Naive thymus-derived CD4-positive, alpha-beta T cell (primary cell): ENCODE measurements at regions of chr14 and their contacts with region 1.

Region 1: GRCh38 chr14:21557084-21557901 is 22.6 kb downstream of the OR10G3 start:
- DNase-seq: peak; percentile 25 to 81 (median 74)
- ATAC-seq: peak; percentile 84
- H3K4me3 ChIP-seq: peak overlapping the region; percentile 27
- H3K4me3 Mint-ChIP-seq: peak overlapping the region in 9 of 10 donors; percentile 14 to 71 (median 46)
- H3K27ac ChIP-seq: peak overlapping the region; percentile 24
- H3K27ac Mint-ChIP-seq: peak overlapping the region in 8 of 9 donors; percentile 6 to 92 (median 64)
- H3K4me1 ChIP-seq: peaks cover 0 to 4% of the 10 kb centered on the region in 2 donors
- H3K4me1 Mint-ChIP-seq: peaks cover 2 to 12% (median 7%) of the 10 kb centered on the region in 7 donors
- H3K27me3 ChIP-seq: no peaks in the 10 kb centered on the region
- H3K27me3 Mint-ChIP-seq: peaks cover 0 to 2% (median 0%) of the 10 kb centered on the region in 5 donors

Region 2: DNA sequence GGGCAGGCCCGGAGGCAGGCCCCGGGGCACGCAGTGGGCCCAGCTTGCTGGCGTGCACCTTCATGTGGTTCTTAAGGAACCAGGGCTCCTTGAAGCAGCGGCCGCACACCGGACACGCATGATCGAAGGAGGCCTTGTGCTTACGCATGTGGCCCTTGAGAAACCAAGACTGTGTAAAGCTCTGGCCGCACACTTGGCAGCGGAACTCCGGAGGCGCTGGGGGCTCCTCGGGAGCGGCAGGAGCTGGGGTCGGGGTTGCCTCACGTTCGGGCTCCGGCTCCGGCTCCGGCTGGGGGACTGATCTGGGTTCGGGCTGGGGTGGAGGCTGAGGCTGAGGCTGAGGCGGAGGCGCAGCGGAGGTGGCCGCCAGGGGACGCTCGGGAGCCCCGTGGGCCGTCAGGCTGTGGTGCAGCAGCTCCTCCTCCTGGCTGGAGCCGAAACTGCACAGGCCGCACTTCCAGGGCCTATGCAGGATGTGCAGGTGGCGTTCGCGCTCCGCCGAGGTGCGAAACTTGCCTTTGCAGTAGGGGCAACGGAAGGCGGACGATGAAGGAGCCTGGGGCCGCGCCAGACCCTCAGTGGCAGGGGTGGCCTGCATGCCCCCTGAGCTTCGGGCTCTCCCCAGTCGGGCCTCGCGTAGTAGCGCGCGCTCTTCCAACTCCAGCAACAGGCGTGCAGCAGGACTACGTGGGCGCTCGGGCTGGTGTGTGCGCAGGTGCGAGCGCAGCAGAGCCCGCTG is 464.9 kb before region 1 on chr14:
- CTCF ChIA-PET with region 1: no interaction called
- POLR2A ChIA-PET with region 1: no interaction called
- intact Hi-C with region 1: loop called in 1 of 2 experiments (anchors 1 kb)
- DNase-seq: peak; percentile 82 to 98 (median 93)
- ATAC-seq: peak; percentile 90
- H3K4me3 ChIP-seq: no peak overlapping the region
- H3K4me3 Mint-ChIP-seq: peak overlapping the region in 1 of 10 donors; percentile 6
- H3K27ac ChIP-seq: no peak overlapping the region
- H3K27ac Mint-ChIP-seq: peak overlapping the region in 8 of 9 donors; percentile 17 to 88 (median 78)
- H3K4me1 ChIP-seq: peaks cover 6 to 14% of the 10 kb centered on the region in 2 donors
- H3K4me1 Mint-ChIP-seq: peaks cover 15 to 37% (median 27%) of the 10 kb centered on the region in 7 donors
- H3K27me3 ChIP-seq: no peaks in the 10 kb centered on the region
- H3K27me3 Mint-ChIP-seq: peaks cover 0 to 17% (median 0%) of the 10 kb centered on the region in 5 donors

Region 3: GRCh38 chr14:21241218-21241819 is 316.0 kb before region 1 on chr14:
- CTCF ChIA-PET with region 1: interaction called, 5 read pairs
- POLR2A ChIA-PET with region 1: no interaction called
- intact Hi-C with region 1: loop called (anchors 1 kb)
- DNase-seq: peak in 2 of 9 donors; percentile 38 to 49
- ATAC-seq: no peak
- H3K4me3 ChIP-seq: no peak overlapping the region
- H3K4me3 Mint-ChIP-seq: no peak overlapping the region
- H3K27ac ChIP-seq: no peak overlapping the region
- H3K27ac Mint-ChIP-seq: peak overlapping the region in 8 of 9 donors; percentile 3 to 88 (median 70)
- H3K4me1 ChIP-seq: peaks cover 44% of the 10 kb centered on the region in 2 donors
- H3K4me1 Mint-ChIP-seq: peaks cover 36 to 85% (median 60%) of the 10 kb centered on the region in 7 donors
- H3K27me3 ChIP-seq: no peaks in the 10 kb centered on the region
- H3K27me3 Mint-ChIP-seq: no peaks in the 10 kb centered on the region

Region 4: GRCh38 chr14:21437063-21437901 is 120.0 kb before region 1 on chr14:
- CTCF ChIA-PET with region 1: no interaction called
- POLR2A ChIA-PET with region 1: interaction called, 3 read pairs
- intact Hi-C with region 1: loop called (anchors 1 to 5 kb)
- DNase-seq: peak; percentile 93 to 100 (median 99)
- ATAC-seq: peak; percentile 100
- H3K4me3 ChIP-seq: peak overlapping the region; percentile 87
- H3K4me3 Mint-ChIP-seq: peak overlapping the region; percentile 86 to 97 (median 92)
- H3K27ac ChIP-seq: peak overlapping the region; percentile 94
- H3K27ac Mint-ChIP-seq: peak overlapping the region; percentile 90 to 98 (median 94)
- H3K4me1 ChIP-seq: peaks cover 13 to 22% of the 10 kb centered on the region in 2 donors
- H3K4me1 Mint-ChIP-seq: peaks cover 43 to 86% (median 68%) of the 10 kb centered on the region in 7 donors
- H3K27me3 ChIP-seq: no peaks in the 10 kb centered on the region
- H3K27me3 Mint-ChIP-seq: no peaks in the 10 kb centered on the region

Region 5: GRCh38 chr14:21498553-21499526 is 58.5 kb before region 1 on chr14:
- CTCF ChIA-PET with region 1: interaction called, 96 read pairs
- POLR2A ChIA-PET with region 1: interaction called, 4 read pairs
- intact Hi-C with region 1: loop called (anchors 1 kb)
- DNase-seq: peak in 7 of 9 donors; percentile 35 to 68 (median 61)
- ATAC-seq: peak; percentile 87
- H3K4me3 ChIP-seq: no peak overlapping the region
- H3K4me3 Mint-ChIP-seq: peak overlapping the region in 8 of 10 donors; percentile 2 to 39 (median 24)
- H3K27ac ChIP-seq: peak overlapping the region; percentile 52
- H3K27ac Mint-ChIP-seq: peak overlapping the region; percentile 56 to 90 (median 79)
- H3K4me1 ChIP-seq: peaks cover 4 to 8% of the 10 kb centered on the region in 2 donors
- H3K4me1 Mint-ChIP-seq: peaks cover 14 to 39% (median 28%) of the 10 kb centered on the region in 7 donors
- H3K27me3 ChIP-seq: no peaks in the 10 kb centered on the region
- H3K27me3 Mint-ChIP-seq: no peaks in the 10 kb centered on the region

Region 6: GRCh38 chr14:21525962-21526671 is 31.2 kb before region 1 on chr14 and contains the start of gene SALL2:
- CTCF ChIA-PET with region 1: interaction called, 9 read pairs
- POLR2A ChIA-PET with region 1: interaction called, 3 read pairs
- intact Hi-C with region 1: loop called in 1 of 2 experiments (anchors 1 kb)
- DNase-seq: peak in 8 of 9 donors; percentile 44 to 80 (median 60)
- ATAC-seq: peak; percentile 82
- H3K4me3 ChIP-seq: peak within 1 kb of the TSS; percentile 67
- H3K4me3 Mint-ChIP-seq: peak within 1 kb of the TSS; percentile 65 to 91 (median 88)
- H3K27ac ChIP-seq: peak within 1 kb of the TSS; percentile 75
- H3K27ac Mint-ChIP-seq: peak within 1 kb of the TSS; percentile 43 to 90 (median 81)
- H3K4me1 ChIP-seq: peaks cover 5 to 9% of the 10 kb centered on the region in 2 donors
- H3K4me1 Mint-ChIP-seq: peaks cover 10 to 27% (median 21%) of the 10 kb centered on the region in 7 donors
- H3K27me3 ChIP-seq: no peaks in the 10 kb centered on the region
- H3K27me3 Mint-ChIP-seq: peaks cover 0 to 11% (median 0%) of the 10 kb centered on the region in 5 donors
- total RNA-seq, gene SALL2: 2.3 to 8.3 (median 3.9) TPM

Region 7: GRCh38 chr14:22177870-22178269 is 620.6 kb after region 1 on chr14:
- CTCF ChIA-PET with region 1: no interaction called
- POLR2A ChIA-PET with region 1: no interaction called
- intact Hi-C with region 1: no loop called
- DNase-seq: peak in 4 of 9 donors; percentile 19 to 41 (median 24)
- ATAC-seq: peak; percentile 72
- H3K4me3 ChIP-seq: no peak overlapping the region
- H3K4me3 Mint-ChIP-seq: peak overlapping the region in 9 of 10 donors; percentile 16 to 79 (median 78)
- H3K27ac ChIP-seq: no peak overlapping the region
- H3K27ac Mint-ChIP-seq: peak overlapping the region in 8 of 9 donors; percentile 30 to 86 (median 76)
- H3K4me1 ChIP-seq: peaks cover 0 to 5% of the 10 kb centered on the region in 2 donors
- H3K4me1 Mint-ChIP-seq: peaks cover 0 to 28% (median 15%) of the 10 kb centered on the region in 7 donors
- H3K27me3 ChIP-seq: no peaks in the 10 kb centered on the region
- H3K27me3 Mint-ChIP-seq: peaks cover 0 to 4% (median 0%) of the 10 kb centered on the region in 5 donors